ENCODE measurements at regions of chr4 and their contacts with region 1.

Region 1: DNA sequence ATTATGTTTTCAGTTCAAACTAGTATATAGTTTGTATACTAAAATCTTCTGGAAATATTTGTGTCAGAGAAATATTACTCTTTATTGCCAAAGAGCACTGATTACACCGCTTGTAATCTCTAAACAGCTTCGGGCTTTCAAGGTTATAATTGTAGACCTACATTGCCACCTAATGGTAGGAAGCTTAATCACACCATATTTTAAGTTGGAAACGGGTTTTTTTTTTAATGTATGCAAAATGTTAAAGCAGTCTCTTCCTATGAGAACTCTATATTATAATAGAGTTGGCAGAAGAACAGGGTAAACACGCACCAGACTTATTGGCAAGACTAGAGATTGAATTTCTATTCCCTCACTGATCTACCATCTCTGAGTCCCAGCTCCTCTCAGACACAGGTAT is 19.5 kb upstream of the NFXL1 start:
- DNase-seq: no peak
- ATAC-seq: peak in 1 of 2 donors; percentile 27

Region 2: GRCh38 chr4:47668810-47669408 is 264.9 kb before region 1 on chr4:
- intact Hi-C with region 1: loop called in 1 of 2 experiments (anchors 5 kb)
- DNase-seq: no peak
- ATAC-seq: peak; percentile 48 to 73

Region 3: DNA sequence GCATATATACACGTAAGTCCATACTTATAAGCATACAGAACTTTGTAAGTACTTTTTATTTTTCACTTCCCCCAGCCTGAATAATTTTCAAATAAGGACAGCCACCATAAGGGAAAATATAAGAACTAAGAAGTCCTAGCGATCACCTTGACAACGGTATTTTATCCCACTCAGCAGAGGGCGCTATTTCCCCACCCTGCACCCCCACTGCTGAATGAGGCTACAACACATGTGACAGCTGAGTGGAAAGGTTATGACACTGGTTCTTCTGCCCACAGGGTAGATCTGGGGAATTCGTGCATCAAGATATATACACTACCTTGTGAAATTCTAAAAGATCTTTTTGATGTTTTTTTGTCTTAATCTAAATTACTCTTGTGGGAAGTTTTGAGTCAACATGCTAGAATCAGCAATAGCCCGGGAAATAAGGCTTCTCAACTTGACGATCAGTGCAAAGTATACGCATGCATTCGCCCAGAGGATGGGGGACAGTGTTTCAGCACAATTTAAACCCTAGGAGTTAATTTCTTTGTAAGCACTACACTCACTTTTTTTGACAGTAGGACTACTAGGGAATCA is 247.5 kb before region 1 on chr4:
- intact Hi-C with region 1: loop called (anchors 5 to 10 kb)
- DNase-seq: peak; percentile 36
- ATAC-seq: peak; percentile 75 to 76

Region 4: DNA sequence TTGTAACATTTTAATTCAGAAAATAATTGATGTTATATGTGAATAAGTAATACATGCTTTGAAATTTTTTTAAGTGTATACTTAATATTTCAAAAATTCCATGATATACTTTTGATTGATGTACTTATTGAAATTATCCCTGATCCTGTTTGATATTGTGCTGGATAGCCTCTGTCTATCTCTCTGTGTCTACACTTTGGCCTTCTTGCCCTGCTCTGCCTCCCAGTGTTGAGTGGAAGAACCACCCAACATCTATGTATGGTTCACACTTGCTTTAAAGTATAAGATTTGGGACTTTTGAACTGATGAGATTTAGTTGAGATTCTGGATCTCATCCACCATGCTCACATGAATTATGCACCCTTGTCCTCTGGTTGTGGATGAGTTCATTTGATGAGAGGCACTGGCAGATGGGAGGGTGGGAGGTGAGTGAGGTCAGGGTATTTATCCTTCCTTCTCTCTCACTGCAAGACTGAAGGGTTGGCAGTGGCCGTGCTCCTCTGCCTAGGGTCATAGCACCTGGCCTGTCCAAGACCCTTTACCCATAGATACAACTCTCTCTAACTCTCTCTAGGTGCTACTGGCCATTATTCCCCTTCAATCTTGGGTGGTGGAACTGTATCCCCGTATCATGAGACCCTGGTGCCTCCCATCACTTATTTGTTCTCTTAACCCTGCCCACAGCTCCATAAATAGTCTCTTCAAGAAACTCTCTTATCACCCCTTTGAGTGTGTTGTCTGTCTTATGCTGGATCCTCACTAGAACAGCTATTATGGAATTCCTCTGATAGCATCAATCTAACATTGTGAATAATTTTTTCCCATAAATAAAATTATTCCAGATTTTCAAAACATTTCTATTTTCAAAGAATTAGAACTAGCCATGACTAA is 171.2 kb before region 1 on chr4:
- intact Hi-C with region 1: no loop called
- DNase-seq: no peak
- ATAC-seq: peak in 1 of 2 donors; percentile 66

Measured in left cardiac atrium (tissue), 4 donors.